ENCODE measurements at regions of chr10 and their contacts with region 1.

Region 1: DNA sequence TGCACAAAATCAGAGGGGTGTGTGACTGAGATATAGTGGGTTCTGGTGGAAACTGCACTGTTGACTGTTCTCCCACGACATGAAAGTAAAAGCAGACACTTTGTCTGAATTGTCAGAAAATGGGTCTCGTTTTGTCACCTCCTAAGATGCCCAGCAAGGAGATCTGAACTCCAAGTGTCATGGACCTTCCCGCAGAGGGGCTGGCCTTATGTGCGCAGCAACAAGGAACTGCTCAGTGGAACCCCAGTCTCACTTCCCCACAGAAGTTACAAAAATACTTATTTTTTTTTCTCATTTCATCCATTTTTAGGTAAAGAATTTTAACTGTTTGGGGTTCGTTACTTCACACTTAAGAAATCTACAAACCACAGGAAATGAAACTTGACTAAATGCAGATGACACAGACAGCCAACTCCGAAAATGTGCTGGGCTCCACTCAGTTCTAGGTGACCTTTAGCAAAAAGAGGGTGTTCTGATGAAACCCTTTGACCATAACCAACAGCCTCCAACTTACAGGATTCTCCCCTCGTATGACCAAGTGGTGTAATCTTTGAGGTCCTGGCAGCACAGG is 115.0 kb downstream of the FAM107B start:
- DNase-seq: peak; percentile 92 to 94 (median 93)
- H3K4me3 ChIP-seq: peak overlapping the region in 1 of 3 experiments; percentile 39
- H3K4me3 Mint-ChIP-seq: peak overlapping the region; percentile 9 to 71
- H3K27ac ChIP-seq: peak overlapping the region; percentile 79 to 81
- H3K27ac Mint-ChIP-seq: peak overlapping the region; percentile 89 to 97 (median 95)
- H3K4me1 ChIP-seq: peaks cover 80 to 83% of the 10 kb centered on the region in 2 donors
- H3K4me1 Mint-ChIP-seq: peaks cover 81% of the 10 kb centered on the region
- H3K27me3 ChIP-seq: no peaks in the 10 kb centered on the region
- H3K27me3 Mint-ChIP-seq: peaks cover 0 to 2% (median 0%) of the 10 kb centered on the region in 3 donors
- CTCF ChIP-seq: no peak

Region 2: GRCh38 chr10:14553448-14553847 is 106.3 kb before region 1 on chr10:
- intact Hi-C with region 1: loop called in 1 of 2 experiments (anchors 5 kb)
- DNase-seq: peak; percentile 62 to 78 (median 74)
- H3K4me3 ChIP-seq: peak overlapping the region in 1 of 3 experiments; percentile 39
- H3K4me3 Mint-ChIP-seq: peak overlapping the region in 1 of 2 donors; percentile 66
- H3K27ac ChIP-seq: peak overlapping the region; percentile 82 to 100
- H3K27ac Mint-ChIP-seq: peak overlapping the region; percentile 96 to 100 (median 98)
- H3K4me1 ChIP-seq: peaks cover 82 to 99% of the 10 kb centered on the region in 2 donors
- H3K4me1 Mint-ChIP-seq: peaks cover 92% of the 10 kb centered on the region
- H3K27me3 ChIP-seq: no peaks in the 10 kb centered on the region
- H3K27me3 Mint-ChIP-seq: peaks cover 0 to 1% (median 0%) of the 10 kb centered on the region in 3 donors
- CTCF ChIP-seq: no peak

Region 3: GRCh38 chr10:14604181-14605142 is 55.2 kb before region 1 on chr10:
- intact Hi-C with region 1: loop called (anchors 5 kb)
- DNase-seq: peak; percentile 61 to 84 (median 82)
- H3K4me3 ChIP-seq: peak overlapping the region; percentile 75 to 100 (median 81)
- H3K4me3 Mint-ChIP-seq: peak overlapping the region; percentile 97 to 98
- H3K27ac ChIP-seq: peak overlapping the region; percentile 68 to 96
- H3K27ac Mint-ChIP-seq: peak overlapping the region; percentile 98 to 100 (median 99)
- H3K4me1 ChIP-seq: peaks cover 62 to 64% of the 10 kb centered on the region in 2 donors
- H3K4me1 Mint-ChIP-seq: peaks cover 64% of the 10 kb centered on the region
- H3K27me3 ChIP-seq: no peaks in the 10 kb centered on the region
- H3K27me3 Mint-ChIP-seq: peaks cover 0 to 3% (median 0%) of the 10 kb centered on the region in 3 donors
- CTCF ChIP-seq: no peak

Region 4: GRCh38 chr10:14617852-14618251 is 41.9 kb before region 1 on chr10:
- intact Hi-C with region 1: loop called (anchors 5 kb)
- DNase-seq: peak; percentile 88 to 97 (median 93)
- H3K4me3 ChIP-seq: peak overlapping the region in 1 of 3 experiments; percentile 35
- H3K4me3 Mint-ChIP-seq: peak overlapping the region; percentile 65 to 81
- H3K27ac ChIP-seq: peak overlapping the region; percentile 87 to 88
- H3K27ac Mint-ChIP-seq: peak overlapping the region; percentile 98 to 100 (median 99)
- H3K4me1 ChIP-seq: peaks cover 58 to 66% of the 10 kb centered on the region in 2 donors
- H3K4me1 Mint-ChIP-seq: peaks cover 59% of the 10 kb centered on the region
- H3K27me3 ChIP-seq: no peaks in the 10 kb centered on the region
- H3K27me3 Mint-ChIP-seq: peaks cover 0 to 1% (median 0%) of the 10 kb centered on the region in 3 donors
- CTCF ChIP-seq: peak; percentile 15

Region 5: DNA sequence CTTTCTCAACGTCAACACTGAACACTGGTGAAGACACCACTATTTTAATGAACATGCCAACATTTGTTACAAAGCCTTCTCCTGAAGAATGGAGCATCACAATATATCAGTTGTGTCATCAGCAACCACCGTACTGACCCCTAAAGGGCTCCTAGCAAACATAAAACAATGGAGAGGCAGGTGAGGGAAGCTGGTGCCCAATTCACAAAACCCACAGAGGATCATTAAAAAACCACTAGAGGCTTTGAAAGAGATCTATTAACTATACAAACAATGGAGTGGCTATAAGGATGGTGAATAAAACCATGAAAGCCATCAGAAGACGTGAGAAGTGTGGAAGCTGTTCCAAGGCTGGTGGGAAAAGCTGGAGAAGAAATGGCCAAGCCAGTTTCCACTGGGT is 35.8 kb before region 1 on chr10:
- intact Hi-C with region 1: loop called (anchors 5 kb)
- DNase-seq: no peak
- H3K4me3 ChIP-seq: no peak overlapping the region
- H3K4me3 Mint-ChIP-seq: no peak overlapping the region
- H3K27ac ChIP-seq: no peak overlapping the region
- H3K27ac Mint-ChIP-seq: peak overlapping the region in 1 of 7 donors; percentile 41
- H3K4me1 ChIP-seq: peaks cover 19 to 26% of the 10 kb centered on the region in 2 donors
- H3K4me1 Mint-ChIP-seq: peaks cover 26% of the 10 kb centered on the region
- H3K27me3 ChIP-seq: no peaks in the 10 kb centered on the region
- H3K27me3 Mint-ChIP-seq: peaks cover 0 to 1% (median 0%) of the 10 kb centered on the region in 3 donors
- CTCF ChIP-seq: no peak

Region 6: GRCh38 chr10:14648005-14648765 is 11.5 kb before region 1 on chr10:
- intact Hi-C with region 1: loop called in 1 of 2 experiments (anchors 1 kb)
- DNase-seq: peak; percentile 82 to 92 (median 88)
- H3K4me3 ChIP-seq: peak overlapping the region; percentile 12 to 61 (median 40)
- H3K4me3 Mint-ChIP-seq: peak overlapping the region; percentile 58 to 78
- H3K27ac ChIP-seq: peak overlapping the region; percentile 80 to 92
- H3K27ac Mint-ChIP-seq: peak overlapping the region; percentile 95 to 97 (median 96)
- H3K4me1 ChIP-seq: peaks cover 28 to 33% of the 10 kb centered on the region in 2 donors
- H3K4me1 Mint-ChIP-seq: peaks cover 40% of the 10 kb centered on the region
- H3K27me3 ChIP-seq: no peaks in the 10 kb centered on the region
- H3K27me3 Mint-ChIP-seq: no peaks in the 10 kb centered on the region
- CTCF ChIP-seq: no peak